CD8-positive, alpha-beta memory T cell (primary cell): ENCODE measurements at regions of chrX and their contacts with region 1.

Region 1: DNA sequence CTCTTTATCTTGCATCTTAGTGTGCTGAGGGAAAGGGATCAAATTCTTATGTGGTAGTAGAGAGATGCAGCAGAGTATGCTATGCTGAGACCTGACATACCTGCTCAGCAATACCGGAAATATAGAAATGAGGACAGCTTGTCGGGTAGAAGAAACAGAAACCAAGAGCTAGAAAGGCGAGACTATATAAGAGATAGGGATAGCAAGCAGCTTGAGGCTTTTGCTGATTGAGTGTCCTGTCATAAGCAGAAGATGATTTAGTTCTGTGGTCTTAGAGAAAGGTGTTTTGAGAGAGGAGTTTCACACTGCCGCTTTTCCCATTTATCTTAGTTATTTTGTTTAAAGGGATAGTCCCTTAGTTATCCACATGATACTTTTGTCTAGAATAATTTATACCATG is 31.7 kb downstream of the USP9X start:
- DNase-seq: peak in 2 of 5 donors; percentile 26 to 46
- H3K4me3 ChIP-seq: no peak overlapping the region
- H3K4me3 Mint-ChIP-seq: peak overlapping the region; percentile 43 to 78 (median 61)
- H3K27ac ChIP-seq: no peak overlapping the region
- H3K27ac Mint-ChIP-seq: peak overlapping the region; percentile 32 to 93 (median 64)
- H3K4me1 ChIP-seq: peaks cover 36% of the 10 kb centered on the region
- H3K4me1 Mint-ChIP-seq: peaks cover 61 to 80% (median 70%) of the 10 kb centered on the region in 3 donors
- H3K27me3 ChIP-seq: no peaks in the 10 kb centered on the region
- H3K27me3 Mint-ChIP-seq: no peaks in the 10 kb centered on the region

Region 2: DNA sequence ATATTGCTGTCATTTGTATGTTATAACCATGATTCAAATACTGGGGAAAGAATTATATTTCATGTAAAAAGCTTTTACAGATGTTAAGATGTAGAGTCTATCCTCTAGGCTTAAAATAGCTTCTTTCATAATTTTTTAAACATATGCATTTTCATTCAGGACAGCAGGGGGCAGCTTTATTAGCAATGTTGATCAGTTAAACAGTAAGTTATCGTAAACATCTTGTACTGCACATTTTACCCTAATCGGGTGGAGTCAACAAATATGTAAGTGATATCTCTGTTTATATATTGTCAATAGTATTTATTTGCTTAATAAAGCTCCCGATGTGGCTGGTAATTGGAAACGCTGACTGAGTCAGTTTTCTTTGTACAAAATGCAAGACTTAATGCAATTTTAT is 239.1 kb before region 1 on chrX:
- CTCF ChIA-PET with region 1: interaction called, 27 read pairs
- POLR2A ChIA-PET with region 1: no interaction called
- DNase-seq: peak in 2 of 5 donors; percentile 9 to 20
- H3K4me3 ChIP-seq: no peak overlapping the region
- H3K4me3 Mint-ChIP-seq: no peak overlapping the region
- H3K27ac ChIP-seq: no peak overlapping the region
- H3K27ac Mint-ChIP-seq: no peak overlapping the region
- H3K4me1 ChIP-seq: no peaks in the 10 kb centered on the region
- H3K4me1 Mint-ChIP-seq: no peaks in the 10 kb centered on the region
- H3K27me3 ChIP-seq: no peaks in the 10 kb centered on the region
- H3K27me3 Mint-ChIP-seq: peaks cover 0 to 14% of the 10 kb centered on the region in 2 donors